ENCODE measurements at regions of chr4 and their contacts with region 1.

Region 1: GRCh38 chr4:94406668-94407437 is 44.9 kb upstream of the PDLIM5 start:
- DNase-seq: peak; percentile 57 to 79 (median 70)
- H3K4me3 ChIP-seq: no peak overlapping the region
- H3K4me3 Mint-ChIP-seq: no peak overlapping the region
- H3K27ac ChIP-seq: no peak overlapping the region
- H3K27ac Mint-ChIP-seq: no peak overlapping the region
- H3K4me1 ChIP-seq: no peaks in the 10 kb centered on the region
- H3K4me1 Mint-ChIP-seq: peaks cover 2% of the 10 kb centered on the region
- H3K27me3 ChIP-seq: no peaks in the 10 kb centered on the region
- H3K27me3 Mint-ChIP-seq: no peaks in the 10 kb centered on the region
- CTCF ChIP-seq: peak; percentile 89

Region 2: DNA sequence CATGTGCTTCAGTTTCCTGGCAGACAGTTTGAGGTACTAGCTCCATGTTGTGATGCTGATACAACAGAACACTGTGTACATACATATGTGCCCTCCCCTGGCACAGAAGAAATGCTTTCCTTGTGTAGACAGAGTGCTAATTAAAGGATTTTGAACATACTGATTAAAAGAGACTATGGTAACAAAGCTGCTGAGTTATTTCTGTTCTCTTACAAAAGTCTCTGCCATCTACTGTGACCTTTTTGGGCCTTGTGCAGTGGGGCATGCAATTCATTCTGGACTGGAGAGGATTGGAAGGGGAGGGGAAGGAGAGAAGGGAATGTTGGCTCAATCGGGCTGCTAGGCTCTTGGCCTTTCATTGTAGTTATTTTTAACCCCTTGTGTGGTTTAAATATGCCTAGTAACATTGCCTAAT is 50.8 kb after region 1 on chr4:
- intact Hi-C with region 1: no loop called
- DNase-seq: no peak
- H3K4me3 ChIP-seq: no peak overlapping the region
- H3K4me3 Mint-ChIP-seq: no peak overlapping the region
- H3K27ac ChIP-seq: no peak overlapping the region
- H3K27ac Mint-ChIP-seq: no peak overlapping the region
- H3K4me1 ChIP-seq: peaks cover 11 to 12% of the 10 kb centered on the region in 2 donors
- H3K4me1 Mint-ChIP-seq: peaks cover 36% of the 10 kb centered on the region
- H3K27me3 ChIP-seq: no peaks in the 10 kb centered on the region
- H3K27me3 Mint-ChIP-seq: no peaks in the 10 kb centered on the region
- CTCF ChIP-seq: no peak

Region 3: DNA sequence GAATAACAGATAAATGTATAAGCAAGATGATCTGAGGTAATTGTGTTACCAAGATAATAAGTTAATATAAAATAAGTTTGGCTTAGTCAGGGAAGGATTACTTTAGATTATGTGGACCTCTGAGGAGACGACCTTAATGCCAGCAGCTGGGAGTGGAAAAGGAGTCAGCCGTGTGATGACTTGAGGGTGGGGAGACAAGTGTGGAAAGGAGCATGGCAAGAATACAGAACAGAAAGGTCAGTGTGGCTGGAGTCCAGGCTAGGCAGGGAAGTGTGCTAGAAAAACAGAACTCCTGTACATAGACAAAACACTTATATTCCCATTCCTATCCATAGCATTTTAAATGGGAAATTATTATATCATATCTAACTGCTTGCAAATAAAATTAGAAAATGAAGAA is 183.6 kb after region 1 on chr4:
- intact Hi-C with region 1: loop called (anchors 5 kb)
- DNase-seq: no peak
- H3K4me3 ChIP-seq: no peak overlapping the region
- H3K4me3 Mint-ChIP-seq: no peak overlapping the region
- H3K27ac ChIP-seq: no peak overlapping the region
- H3K27ac Mint-ChIP-seq: peak overlapping the region in 1 of 7 donors; percentile 42
- H3K4me1 ChIP-seq: no peaks in the 10 kb centered on the region
- H3K4me1 Mint-ChIP-seq: peaks cover 2% of the 10 kb centered on the region
- H3K27me3 ChIP-seq: no peaks in the 10 kb centered on the region
- H3K27me3 Mint-ChIP-seq: peaks cover 0 to 2% (median 0%) of the 10 kb centered on the region in 3 donors
- CTCF ChIP-seq: no peak

Region 4: GRCh38 chr4:94595879-94596483 is 189.1 kb after region 1 on chr4:
- intact Hi-C with region 1: loop called (anchors 5 kb)
- DNase-seq: peak in 2 of 3 donors; percentile 37 to 38
- H3K4me3 ChIP-seq: no peak overlapping the region
- H3K4me3 Mint-ChIP-seq: no peak overlapping the region
- H3K27ac ChIP-seq: no peak overlapping the region
- H3K27ac Mint-ChIP-seq: no peak overlapping the region
- H3K4me1 ChIP-seq: no peaks in the 10 kb centered on the region
- H3K4me1 Mint-ChIP-seq: peaks cover 2% of the 10 kb centered on the region
- H3K27me3 ChIP-seq: no peaks in the 10 kb centered on the region
- H3K27me3 Mint-ChIP-seq: no peaks in the 10 kb centered on the region
- CTCF ChIP-seq: peak; percentile 84